ENCODE measurements at regions of chr5 and their contacts with region 1.

Region 1: DNA sequence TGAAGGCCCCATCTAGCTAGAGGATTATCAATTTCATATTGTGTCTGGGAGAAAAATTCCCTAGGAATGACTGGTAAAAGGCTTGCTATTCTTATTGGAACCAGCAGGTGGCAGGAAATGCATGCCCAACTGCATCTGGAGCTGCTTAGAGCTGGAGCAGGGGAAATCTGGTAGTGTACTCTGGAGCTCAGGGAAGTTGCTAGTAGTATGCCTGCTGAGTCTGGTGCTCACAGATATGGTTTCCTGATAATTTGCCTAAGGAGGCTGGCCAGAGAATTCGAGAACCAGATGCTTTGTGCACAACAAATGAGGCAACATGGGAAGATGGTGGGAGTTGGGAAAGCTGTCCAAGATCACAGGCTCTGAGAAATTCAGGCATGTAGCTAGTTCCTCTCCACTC is 53.7 kb downstream of the G3BP1 start:
- DNase-seq: peak; percentile 50
- CTCF ChIP-seq: peak; percentile 79

Region 2: DNA sequence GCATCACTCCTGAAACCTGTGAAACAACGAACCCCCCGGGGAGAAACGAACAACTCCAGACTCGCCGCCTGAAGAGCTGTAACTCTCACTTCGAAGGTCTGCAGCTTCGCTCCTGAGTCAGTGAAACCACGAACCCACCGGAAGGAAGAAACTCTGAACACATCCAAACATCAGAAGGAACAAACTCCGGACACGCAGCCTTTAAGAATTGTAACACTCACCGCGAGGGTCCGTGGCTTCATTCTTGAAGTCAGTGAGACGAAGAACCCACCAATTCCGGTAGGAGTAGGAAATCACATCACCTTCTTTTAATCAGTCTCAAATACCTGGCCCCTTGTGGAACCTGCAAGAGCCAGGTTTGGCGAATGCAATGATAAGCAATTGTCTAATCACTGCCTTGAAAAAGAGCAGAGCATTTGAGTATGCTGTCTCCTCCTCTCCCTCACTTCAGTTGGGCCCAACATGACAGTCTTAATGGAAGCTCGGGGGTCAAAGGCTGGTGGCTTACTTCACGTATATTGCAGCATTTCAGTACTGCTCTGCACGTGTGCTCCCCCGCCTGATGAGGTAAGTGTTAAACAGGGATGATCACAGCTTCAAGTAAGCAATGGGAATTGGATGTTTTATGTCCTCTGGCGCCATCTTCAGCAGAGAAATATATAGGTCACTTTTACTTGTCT is 978.7 kb before region 1 on chr5:
- CTCF ChIA-PET with region 1: no interaction called
- POLR2A ChIA-PET with region 1: no interaction called
- DNase-seq: peak; percentile 77
- CTCF ChIP-seq: peak; percentile 66

Region 3: DNA sequence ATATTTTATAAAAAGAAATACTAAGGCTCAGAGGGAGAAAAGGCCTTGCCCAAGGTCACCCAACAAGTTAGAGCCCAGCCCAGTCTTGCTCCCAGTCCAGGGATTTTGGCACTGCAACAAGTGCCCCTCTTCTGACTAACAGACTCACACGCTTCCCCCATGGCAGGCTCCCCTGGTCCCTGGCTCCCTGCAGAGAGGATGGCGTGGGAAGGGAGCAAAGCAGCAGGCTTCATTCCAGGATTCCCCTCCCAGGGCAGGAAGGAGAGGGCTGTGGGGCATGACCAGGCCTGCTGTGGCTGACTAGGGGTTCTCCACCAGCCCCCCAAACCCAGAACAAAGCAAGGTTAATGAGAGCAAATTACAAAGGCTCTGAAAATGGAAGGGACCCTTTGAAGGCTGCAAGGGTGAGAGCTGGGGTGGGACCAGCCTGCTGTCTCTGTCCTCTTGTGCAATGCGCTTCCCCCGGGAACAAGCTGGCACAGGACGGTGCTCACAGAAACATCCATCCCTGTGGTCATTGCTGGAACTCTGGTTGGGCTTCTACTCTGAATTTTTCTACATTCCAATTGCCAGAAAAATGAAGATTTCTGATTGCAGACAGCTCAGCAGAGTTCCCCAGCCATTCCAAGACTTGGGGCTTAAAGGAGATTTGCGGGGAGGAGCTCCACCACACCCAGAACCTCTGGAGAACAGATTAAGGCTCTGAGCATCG is 197.2 kb before region 1 on chr5:
- CTCF ChIA-PET with region 1: no interaction called
- POLR2A ChIA-PET with region 1: no interaction called
- DNase-seq: no peak
- CTCF ChIP-seq: no peak

Region 4: DNA sequence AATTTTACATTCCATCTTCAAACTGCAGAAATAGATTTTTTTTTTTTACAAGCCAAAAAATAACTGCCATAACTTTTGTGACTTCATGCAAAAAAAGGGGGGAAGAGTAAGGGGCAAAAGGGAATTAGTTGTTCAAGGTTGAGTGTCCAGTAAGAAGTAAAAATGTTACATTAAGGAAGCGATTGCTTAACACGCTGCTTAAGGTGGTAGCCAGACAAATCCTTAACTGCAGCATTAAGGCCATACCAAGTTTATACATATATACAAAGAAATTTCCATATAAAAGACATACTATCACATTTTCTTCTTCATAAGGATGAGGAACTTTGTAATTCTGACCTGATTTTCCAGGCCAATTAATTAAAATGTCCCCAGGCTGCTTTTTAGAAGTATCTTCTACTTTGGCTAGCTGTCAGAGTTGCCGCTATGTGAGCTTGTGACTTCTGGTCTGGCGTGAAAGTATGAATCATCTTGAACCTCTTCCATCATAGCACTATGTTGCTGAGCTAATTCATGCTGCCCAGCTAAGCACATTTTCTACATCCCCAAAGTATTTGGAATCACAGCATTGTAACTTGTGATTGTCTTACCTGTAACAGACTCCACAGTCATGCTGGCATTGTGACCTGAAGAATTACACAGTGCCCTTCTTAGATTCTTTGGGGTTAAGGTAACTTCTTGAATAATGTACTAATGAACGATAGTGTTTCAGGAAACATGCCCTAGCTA is 13.7 kb before region 1 on chr5:
- CTCF ChIA-PET with region 1: interaction called, 51 read pairs
- POLR2A ChIA-PET with region 1: no interaction called
- DNase-seq: no peak
- CTCF ChIP-seq: no peak

Region 5: GRCh38 chr5:151851719-151852118 is 26.3 kb after region 1 on chr5:
- CTCF ChIA-PET with region 1: no interaction called
- POLR2A ChIA-PET with region 1: no interaction called
- DNase-seq: no peak
- CTCF ChIP-seq: no peak

Region 6: DNA sequence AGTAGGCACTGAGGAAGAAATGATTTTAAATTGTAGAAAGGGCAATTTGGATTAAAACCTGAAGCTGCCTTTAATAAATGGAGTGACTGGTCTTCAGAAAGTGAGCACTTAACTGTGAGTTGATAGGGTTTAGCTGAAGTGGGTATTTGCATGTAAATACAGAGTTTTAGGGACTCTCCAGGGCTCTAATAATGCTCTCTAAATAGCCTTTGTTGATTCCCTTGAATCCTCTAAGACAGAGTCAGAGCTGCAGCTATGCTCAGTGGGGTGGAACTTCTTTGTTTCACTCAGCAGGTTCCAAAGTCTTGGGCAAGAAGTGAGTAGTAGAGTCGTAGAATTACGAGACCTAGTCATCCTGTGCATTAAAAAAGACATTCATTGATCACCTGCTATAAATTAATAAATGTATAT is 77.8 kb after region 1 on chr5:
- CTCF ChIA-PET with region 1: interaction called, 10 read pairs
- POLR2A ChIA-PET with region 1: no interaction called
- DNase-seq: peak; percentile 40
- CTCF ChIP-seq: no peak

Region 7: DNA sequence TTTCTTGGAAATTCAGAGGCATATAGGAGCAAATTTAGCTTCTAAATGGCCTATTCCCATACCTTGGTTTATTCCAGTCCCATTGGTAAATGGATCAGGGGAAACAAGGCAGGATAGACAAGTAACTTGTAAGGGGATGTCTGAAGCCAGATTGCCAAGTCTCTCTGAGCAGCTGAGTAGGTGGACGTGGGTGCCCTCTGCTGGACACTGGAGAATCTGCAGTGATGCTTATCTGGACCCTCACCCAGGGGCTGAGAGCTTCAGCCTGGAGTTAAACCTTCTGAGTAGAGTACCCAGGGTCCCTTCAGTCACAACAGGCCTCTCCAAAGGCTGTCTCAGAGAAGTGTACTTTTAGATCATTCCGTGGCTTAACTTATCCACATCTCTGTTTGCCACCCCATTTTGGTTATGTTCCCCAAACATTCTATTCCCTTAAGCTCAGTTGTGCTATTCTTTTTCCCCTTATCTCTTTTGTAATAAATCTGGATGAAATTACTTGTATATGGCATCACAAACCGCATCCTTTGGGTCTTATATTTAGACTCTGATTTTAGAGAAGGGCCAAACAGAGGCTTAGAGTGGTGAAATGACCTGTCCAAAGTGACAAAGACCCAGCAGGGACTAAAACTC is 317.5 kb after region 1 on chr5:
- CTCF ChIA-PET with region 1: interaction called, 354 read pairs
- POLR2A ChIA-PET with region 1: no interaction called
- DNase-seq: peak; percentile 67
- CTCF ChIP-seq: peak; percentile 86

Region 8: GRCh38 chr5:152349683-152350526 is 524.5 kb after region 1 on chr5:
- CTCF ChIA-PET with region 1: interaction called, 70 read pairs
- POLR2A ChIA-PET with region 1: no interaction called
- DNase-seq: peak; percentile 40
- CTCF ChIP-seq: peak; percentile 83

Region 9: DNA sequence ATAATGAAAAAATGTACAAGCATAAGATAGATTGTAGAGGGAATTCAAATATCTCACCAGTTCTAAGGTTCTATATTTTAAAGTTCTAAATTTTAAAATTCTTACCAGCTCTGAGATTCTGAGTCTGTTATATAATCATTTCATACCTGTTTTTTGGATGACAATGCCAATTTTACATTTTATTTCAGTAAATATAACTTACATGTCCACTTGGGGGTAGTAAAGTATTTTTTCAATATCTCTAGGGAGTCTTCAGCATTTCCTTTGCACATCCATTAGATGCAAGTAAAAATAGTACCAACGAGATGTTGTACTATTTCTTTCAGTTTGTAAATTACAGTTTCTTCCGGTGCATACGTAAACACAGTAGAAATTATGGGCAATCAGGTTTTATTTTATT is 553.9 kb after region 1 on chr5:
- CTCF ChIA-PET with region 1: no interaction called
- POLR2A ChIA-PET with region 1: no interaction called
- DNase-seq: no peak
- CTCF ChIP-seq: peak; percentile 1

Region 10: DNA sequence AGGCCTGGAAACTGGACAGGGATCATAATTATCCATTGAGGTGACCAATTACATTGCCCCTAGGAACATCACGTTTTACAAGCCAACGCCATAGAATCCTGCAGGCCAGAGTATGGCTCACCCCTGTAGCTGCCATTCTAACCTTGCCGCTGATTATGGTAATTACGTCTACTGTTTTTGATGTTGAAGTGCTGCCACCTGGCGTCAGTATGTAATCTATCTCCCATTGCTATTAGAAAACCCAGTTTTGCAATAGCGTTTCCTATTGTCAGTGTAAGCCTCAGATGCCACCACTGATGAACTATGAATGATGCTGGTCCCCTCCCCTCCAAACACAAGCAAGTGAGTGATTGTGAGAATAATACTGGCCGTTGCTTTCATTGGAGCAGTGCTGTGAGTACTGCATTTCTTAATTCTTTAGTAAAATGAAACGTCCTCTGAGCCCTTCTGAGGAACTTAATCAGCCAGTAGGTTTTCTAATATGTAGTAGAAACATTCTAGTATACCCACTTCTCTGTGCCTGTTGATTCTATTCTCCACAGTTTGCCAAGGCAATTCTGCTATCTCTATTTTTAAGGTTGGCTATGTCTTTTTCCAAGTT is 680.1 kb after region 1 on chr5:
- CTCF ChIA-PET with region 1: interaction called, 13 read pairs
- POLR2A ChIA-PET with region 1: no interaction called
- DNase-seq: peak; percentile 30
- CTCF ChIP-seq: peak; percentile 53